H1 (cell line): ENCODE measurements at regions of chr3 and their contacts with region 1.

Region 1: DNA sequence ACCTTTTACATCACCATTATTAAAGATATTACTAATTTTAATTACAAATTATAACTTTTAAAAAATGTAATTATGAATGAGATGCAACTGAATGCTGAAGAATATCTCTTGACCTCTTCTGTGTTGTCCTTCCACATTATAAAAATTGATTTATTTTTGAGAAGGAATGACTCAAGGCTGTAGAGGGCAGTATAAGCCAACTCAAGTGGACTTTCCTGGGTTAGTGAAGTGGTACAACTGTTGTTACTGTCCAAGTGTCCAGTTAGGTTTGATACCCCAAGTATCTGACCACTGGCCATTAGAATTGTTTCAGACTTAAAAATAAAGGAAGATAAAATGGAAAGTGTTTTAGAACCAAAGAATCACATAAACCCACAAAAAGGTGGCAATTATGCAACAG is 51.9 kb downstream of the BBX start:
- DNase-seq: no peak
- H3K4me3 ChIP-seq: no peak overlapping the region
- H3K27ac ChIP-seq: no peak overlapping the region
- H3K4me1 ChIP-seq: peaks cover 2 to 10% (median 8%) of the 10 kb centered on the region in 4 experiments; a peak in 4 of 7 replicates
- H3K27me3 ChIP-seq: no peaks in the 10 kb centered on the region
- CTCF ChIP-seq: peak in 2 of 3 experiments; percentile 44 to 54; a peak in 2 of 4 replicates
- EP300 ChIP-seq: no peak
- POLR2A ChIP-seq: no peak
- RAD21 ChIP-seq: peak; percentile 78

Region 2: GRCh38 chr3:107589454-107589853 is 14.8 kb after region 1 on chr3:
- CTCF ChIA-PET with region 1: interaction called, 12 read pairs
- POLR2A ChIA-PET with region 1: no interaction called
- DNase-seq: no peak
- H3K4me3 ChIP-seq: no peak overlapping the region
- H3K27ac ChIP-seq: no peak overlapping the region
- H3K4me1 ChIP-seq: peaks cover 0 to 4% (median 0%) of the 10 kb centered on the region in 4 experiments; a peak in 1 of 7 replicates
- H3K27me3 ChIP-seq: no peaks in the 10 kb centered on the region
- CTCF ChIP-seq: no peak
- EP300 ChIP-seq: no peak
- POLR2A ChIP-seq: no peak
- RAD21 ChIP-seq: no peak

Region 3: GRCh38 chr3:107604057-107604822 is 29.6 kb after region 1 on chr3:
- CTCF ChIA-PET with region 1: no interaction called
- POLR2A ChIA-PET with region 1: no interaction called
- DNase-seq: no peak
- H3K4me3 ChIP-seq: no peak overlapping the region
- H3K27ac ChIP-seq: no peak overlapping the region
- H3K4me1 ChIP-seq: peaks cover 0 to 5% (median 2%) of the 10 kb centered on the region in 4 experiments; a peak in 4 of 7 replicates
- H3K27me3 ChIP-seq: no peaks in the 10 kb centered on the region
- CTCF ChIP-seq: no peak
- EP300 ChIP-seq: no peak
- POLR2A ChIP-seq: no peak
- RAD21 ChIP-seq: no peak

Region 4: GRCh38 chr3:107643038-107643883 is 68.6 kb after region 1 on chr3:
- CTCF ChIA-PET with region 1: interaction called, 15 read pairs
- POLR2A ChIA-PET with region 1: no interaction called
- DNase-seq: peak in 1 of 2 experiments; percentile 58
- H3K4me3 ChIP-seq: no peak overlapping the region
- H3K27ac ChIP-seq: no peak overlapping the region
- H3K4me1 ChIP-seq: peaks cover 6 to 12% (median 10%) of the 10 kb centered on the region in 4 experiments; a peak in 6 of 7 replicates
- H3K27me3 ChIP-seq: no peaks in the 10 kb centered on the region
- CTCF ChIP-seq: peak; percentile 18 to 46 (median 43); a peak in 3 of 4 replicates
- EP300 ChIP-seq: no peak
- POLR2A ChIP-seq: no peak
- RAD21 ChIP-seq: peak; percentile 37 to 50

Region 5: DNA sequence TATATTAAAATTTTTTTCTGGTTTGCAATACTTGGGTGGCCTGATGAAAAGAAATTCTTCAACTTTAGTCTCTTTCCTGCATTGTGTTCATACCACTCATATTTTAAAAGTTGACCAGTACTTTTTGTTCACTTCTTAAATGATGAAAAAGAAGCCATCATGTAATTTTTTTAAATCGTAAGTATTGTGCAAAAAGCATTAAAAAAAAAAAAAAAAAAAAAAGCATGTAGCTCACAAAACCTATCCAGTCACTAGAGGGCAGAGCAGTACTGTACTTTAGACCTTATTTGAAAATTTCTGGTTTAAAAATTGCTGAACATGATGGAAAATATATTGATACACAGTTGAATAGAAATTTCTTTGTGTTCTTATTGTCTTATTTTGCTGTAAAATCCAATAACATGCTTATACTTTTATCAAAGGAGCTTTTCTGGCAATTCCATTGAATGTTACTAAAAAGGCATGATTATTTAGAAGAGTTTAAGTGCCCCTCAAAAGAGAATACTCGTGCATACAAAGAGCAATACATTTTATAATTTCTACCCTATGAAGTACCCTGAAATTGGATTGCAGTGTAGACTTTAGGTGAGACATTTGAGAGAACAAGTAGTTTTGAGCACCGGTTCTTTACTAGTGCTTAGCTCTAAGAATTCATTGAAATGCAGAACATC is 85.8 kb after region 1 on chr3:
- CTCF ChIA-PET with region 1: interaction called, 27 read pairs
- POLR2A ChIA-PET with region 1: interaction called, 3 read pairs
- DNase-seq: no peak
- H3K4me3 ChIP-seq: no peak overlapping the region
- H3K27ac ChIP-seq: no peak overlapping the region
- H3K4me1 ChIP-seq: peaks cover 0 to 9% (median under 1%) of the 10 kb centered on the region in 4 experiments; a peak in 3 of 7 replicates
- H3K27me3 ChIP-seq: no peaks in the 10 kb centered on the region
- CTCF ChIP-seq: peak in 1 of 3 experiments; percentile 48; a peak in 1 of 4 replicates
- EP300 ChIP-seq: no peak
- POLR2A ChIP-seq: no peak
- RAD21 ChIP-seq: peak in 1 of 2 experiments; percentile 48; a peak in 3 of 4 replicates

Region 6: DNA sequence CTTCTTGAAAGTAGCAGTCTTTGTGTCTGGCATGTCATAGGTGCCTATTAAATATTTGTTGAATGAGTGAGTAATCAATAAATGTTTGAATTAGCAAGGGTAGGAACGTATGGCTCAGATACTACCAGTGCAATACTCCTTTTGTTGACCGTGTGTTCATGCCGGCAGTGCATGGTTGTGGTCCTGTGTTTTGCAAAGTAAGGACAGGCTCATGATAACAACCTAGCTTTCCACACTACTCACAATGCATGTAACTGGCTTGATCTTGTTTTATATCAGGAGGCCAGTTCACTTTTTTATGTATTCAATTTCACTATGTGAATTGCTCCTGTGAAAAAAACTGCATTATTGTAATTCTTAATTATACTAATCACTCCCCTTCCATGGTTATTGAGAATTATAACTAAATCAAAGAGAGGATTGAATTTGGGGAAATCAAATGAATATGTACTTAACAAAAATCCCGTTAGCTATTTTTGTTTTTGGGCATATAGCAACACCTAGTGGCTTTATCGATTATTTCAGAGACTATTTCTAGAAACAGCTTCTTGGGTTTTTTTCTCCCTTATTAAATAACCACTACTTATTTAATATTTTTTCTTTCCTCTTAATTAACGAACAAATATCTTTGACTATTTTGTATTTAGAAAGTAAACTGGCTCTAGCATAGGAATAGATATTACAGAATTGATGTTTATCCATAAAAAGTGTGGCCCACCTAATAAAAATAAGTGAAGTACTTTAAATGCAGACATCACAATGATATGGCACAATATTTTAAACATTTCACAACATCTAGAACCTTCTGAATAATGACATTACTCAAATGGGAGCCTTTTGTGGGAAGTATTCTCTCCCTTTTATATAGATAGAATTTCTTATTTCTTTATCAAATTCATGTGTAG is 166.6 kb after region 1 on chr3:
- CTCF ChIA-PET with region 1: interaction called, 16 read pairs
- POLR2A ChIA-PET with region 1: no interaction called
- DNase-seq: no peak
- H3K4me3 ChIP-seq: no peak overlapping the region
- H3K27ac ChIP-seq: no peak overlapping the region
- H3K4me1 ChIP-seq: no peaks in the 10 kb centered on the region
- H3K27me3 ChIP-seq: no peaks in the 10 kb centered on the region
- CTCF ChIP-seq: peak in 1 of 3 experiments; percentile 30; a peak in 1 of 4 replicates
- EP300 ChIP-seq: no peak
- POLR2A ChIP-seq: no peak
- RAD21 ChIP-seq: peak in 1 of 2 experiments; percentile 64; a peak in 3 of 4 replicates

Region 7: DNA sequence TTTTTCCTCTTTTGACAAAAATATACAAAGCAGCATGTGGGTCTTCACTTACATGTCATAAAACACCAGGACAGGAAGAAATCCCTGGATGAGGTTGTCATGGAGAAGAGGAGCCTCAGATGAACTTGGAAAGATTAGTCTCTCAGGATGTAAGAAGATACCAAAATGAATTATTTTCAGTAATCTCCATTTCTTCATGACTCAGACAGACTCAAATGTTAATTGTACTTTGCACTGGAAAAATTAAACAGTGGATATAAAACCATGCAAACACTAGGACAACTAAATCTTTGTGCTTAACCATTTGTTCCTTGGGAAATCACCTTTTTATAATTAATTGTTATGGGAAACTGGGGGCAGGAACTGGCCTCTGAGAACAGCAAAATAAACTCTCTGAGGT is 279.2 kb after region 1 on chr3:
- CTCF ChIA-PET with region 1: no interaction called
- POLR2A ChIA-PET with region 1: no interaction called
- DNase-seq: no peak
- H3K4me3 ChIP-seq: no peak overlapping the region
- H3K27ac ChIP-seq: no peak overlapping the region
- H3K4me1 ChIP-seq: no peaks in the 10 kb centered on the region
- H3K27me3 ChIP-seq: no peaks in the 10 kb centered on the region
- CTCF ChIP-seq: no peak
- EP300 ChIP-seq: no peak
- POLR2A ChIP-seq: no peak
- RAD21 ChIP-seq: no peak